Heart right ventricle (tissue), 16 donors: ENCODE measurements at regions of chr6 and their contacts with region 1.

Region 1: GRCh38 chr6:142642651-142643050 is 302.3 kb downstream of the HIVEP2 start:
- DNase-seq: no peak
- ATAC-seq: no peak
- H3K4me3 ChIP-seq: no peak overlapping the region
- H3K27ac ChIP-seq: no peak overlapping the region
- H3K4me1 ChIP-seq: no peaks in the 10 kb centered on the region
- H3K27me3 ChIP-seq: peaks cover 0 to 20% (median under 1%) of the 10 kb centered on the region in 7 donors
- CTCF ChIP-seq: no peak

Region 2: GRCh38 chr6:141077355-141078333 is 1565.0 kb before region 1 on chr6:
- intact Hi-C with region 1: loop called in 1 of 10 experiments (anchors 5 kb)
- DNase-seq: no peak
- ATAC-seq: no peak
- H3K4me3 ChIP-seq: no peak overlapping the region
- H3K27ac ChIP-seq: no peak overlapping the region
- H3K4me1 ChIP-seq: no peaks in the 10 kb centered on the region
- H3K27me3 ChIP-seq: no peaks in the 10 kb centered on the region
- CTCF ChIP-seq: no peak